Activated CD8-positive, alpha-beta T cell treated with anti-CD3 and anti-CD28 coated beads for 36 hours (primary cell): ENCODE measurements at regions of chr1 and their contacts with region 1.

Region 1: DNA sequence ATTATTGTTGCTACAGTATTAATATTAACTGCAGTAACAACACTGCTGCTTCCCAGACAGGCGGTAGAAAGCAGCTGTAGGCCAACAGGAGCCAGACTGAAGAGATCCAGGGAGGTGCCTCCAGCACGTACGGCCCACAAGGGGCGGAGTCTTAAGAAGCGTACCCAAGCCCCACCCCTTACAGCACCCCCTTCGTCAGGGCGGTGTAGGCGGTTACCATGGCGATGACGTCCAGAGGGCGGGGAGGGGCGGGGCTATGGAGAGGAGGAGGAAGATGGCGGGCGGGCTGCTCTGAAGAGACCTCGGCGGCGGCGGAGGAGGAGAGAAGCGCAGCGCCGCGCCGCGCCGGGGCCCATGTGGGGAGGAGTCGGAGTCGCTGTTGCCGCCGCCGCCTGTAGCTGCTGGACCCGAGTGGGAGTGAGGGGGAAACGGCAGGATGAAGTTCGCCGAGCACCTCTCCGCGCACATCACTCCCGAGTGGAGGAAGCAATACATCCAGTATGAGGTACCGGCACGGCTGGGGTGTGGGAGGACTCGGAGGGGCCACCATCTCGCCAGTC is at the start of gene XPR1:
- DNase-seq: peak; percentile 99
- ATAC-seq: peak; percentile 99
- H3K4me3 Mint-ChIP-seq: no peak within 1 kb of the TSS
- H3K27ac Mint-ChIP-seq: peak within 1 kb of the TSS; percentile 85
- H3K4me1 Mint-ChIP-seq: peaks cover 12% of the 10 kb centered on the region
- H3K27me3 Mint-ChIP-seq: no peaks in the 10 kb centered on the region
- CTCF ChIP-seq: no peak
- total RNA-seq, gene XPR1: 12.8 to 14.4 TPM

Region 2: GRCh38 chr1:180502360-180503273 is 129.2 kb before region 1 on chr1 and contains the start of gene ACBD6:
- CTCF ChIA-PET with region 1: no interaction called
- POLR2A ChIA-PET with region 1: no interaction called
- intact Hi-C with region 1: no loop called
- DNase-seq: peak; percentile 92
- ATAC-seq: peak; percentile 94
- H3K4me3 Mint-ChIP-seq: peak within 1 kb of the TSS; percentile 96
- H3K27ac Mint-ChIP-seq: peak within 1 kb of the TSS; percentile 97
- H3K4me1 Mint-ChIP-seq: peaks cover 24% of the 10 kb centered on the region
- H3K27me3 Mint-ChIP-seq: no peaks in the 10 kb centered on the region
- CTCF ChIP-seq: no peak
- total RNA-seq, gene ACBD6: 41.3 to 45.0 TPM

Region 3: DNA sequence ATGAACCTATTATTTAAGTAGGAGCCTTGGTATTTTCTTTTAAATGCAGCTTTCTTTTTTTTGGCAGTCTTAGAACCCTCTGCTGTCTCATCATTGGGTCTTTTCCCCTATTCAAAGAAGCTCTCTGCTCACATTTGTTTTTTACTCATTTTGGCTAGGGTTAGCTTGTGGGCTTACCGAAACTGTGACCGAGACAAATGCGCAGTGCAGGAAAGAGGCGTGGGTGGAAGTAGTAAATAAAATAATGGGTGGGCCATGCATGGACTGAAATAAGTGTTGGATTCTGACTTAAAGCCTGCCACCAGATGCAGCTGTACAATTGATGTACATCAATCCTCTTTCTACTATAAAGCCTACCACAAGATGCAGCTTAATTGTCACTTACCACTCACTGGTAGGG is 14.7 kb after region 1 on chr1:
- CTCF ChIA-PET with region 1: interaction called, 13 read pairs
- POLR2A ChIA-PET with region 1: interaction called, 5 read pairs
- intact Hi-C with region 1: no loop called
- DNase-seq: peak; percentile 41
- ATAC-seq: peak; percentile 61
- H3K4me3 Mint-ChIP-seq: no peak overlapping the region
- H3K27ac Mint-ChIP-seq: peak overlapping the region; percentile 5
- H3K4me1 Mint-ChIP-seq: peaks cover 31% of the 10 kb centered on the region
- H3K27me3 Mint-ChIP-seq: no peaks in the 10 kb centered on the region
- CTCF ChIP-seq: no peak

Region 4: GRCh38 chr1:180732866-180733265 is 101.0 kb after region 1 on chr1:
- CTCF ChIA-PET with region 1: no interaction called
- POLR2A ChIA-PET with region 1: no interaction called
- intact Hi-C with region 1: no loop called
- DNase-seq: no peak
- ATAC-seq: no peak
- H3K4me3 Mint-ChIP-seq: no peak overlapping the region
- H3K27ac Mint-ChIP-seq: no peak overlapping the region
- H3K4me1 Mint-ChIP-seq: no peaks in the 10 kb centered on the region
- H3K27me3 Mint-ChIP-seq: no peaks in the 10 kb centered on the region
- CTCF ChIP-seq: no peak